SK-N-SH (cell line): ENCODE measurements at regions of chr19 and their contacts with region 1.

Region 1: DNA sequence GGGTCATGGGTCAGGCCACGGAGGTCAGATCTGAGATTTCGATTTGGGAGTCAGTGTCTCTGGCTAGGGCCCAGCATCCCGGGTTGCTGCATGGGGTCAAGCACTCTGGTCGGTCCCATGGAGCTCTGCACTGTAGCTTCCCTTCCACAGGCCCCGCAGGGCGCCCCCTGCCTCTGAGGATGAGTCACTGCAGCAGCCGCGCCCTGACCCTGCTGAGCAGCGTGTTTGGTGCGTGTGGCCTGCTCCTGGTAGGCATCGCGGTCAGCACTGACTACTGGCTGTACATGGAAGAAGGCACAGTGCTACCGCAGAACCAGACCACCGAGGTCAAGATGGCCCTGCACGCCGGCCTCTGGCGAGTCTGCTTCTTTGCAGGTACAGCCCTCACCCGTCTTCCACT is 3.6 kb downstream of the CACNG7 start:
- DNase-seq: peak; percentile 62
- H3K4me3 ChIP-seq: no peak overlapping the region; a peak in 1 of 4 replicates
- H3K27ac ChIP-seq: no peak overlapping the region
- H3K4me1 ChIP-seq: peaks cover 0 to 9% of the 10 kb centered on the region in 2 experiments; a peak in 1 of 4 replicates
- H3K27me3 ChIP-seq: no peaks in the 10 kb centered on the region
- CTCF ChIP-seq: peak; percentile 48
- EP300 ChIP-seq: no peak
- RAD21 ChIP-seq: no peak

Region 2: GRCh38 chr19:53947624-53948023 is 35.0 kb after region 1 on chr19:
- CTCF ChIA-PET with region 1: interaction called, 12 read pairs
- POLR2A ChIA-PET with region 1: no interaction called
- DNase-seq: peak; percentile 65
- H3K4me3 ChIP-seq: no peak overlapping the region
- H3K27ac ChIP-seq: no peak overlapping the region
- H3K4me1 ChIP-seq: no peaks in the 10 kb centered on the region; a peak in 2 of 4 replicates
- H3K27me3 ChIP-seq: no peaks in the 10 kb centered on the region
- CTCF ChIP-seq: peak; percentile 32; the same call in 1 of the 2 replicates
- EP300 ChIP-seq: no peak
- RAD21 ChIP-seq: peak; percentile 59